K562 (cell line): ENCODE measurements at regions of chr13 and their contacts with region 1.

Region 1: DNA sequence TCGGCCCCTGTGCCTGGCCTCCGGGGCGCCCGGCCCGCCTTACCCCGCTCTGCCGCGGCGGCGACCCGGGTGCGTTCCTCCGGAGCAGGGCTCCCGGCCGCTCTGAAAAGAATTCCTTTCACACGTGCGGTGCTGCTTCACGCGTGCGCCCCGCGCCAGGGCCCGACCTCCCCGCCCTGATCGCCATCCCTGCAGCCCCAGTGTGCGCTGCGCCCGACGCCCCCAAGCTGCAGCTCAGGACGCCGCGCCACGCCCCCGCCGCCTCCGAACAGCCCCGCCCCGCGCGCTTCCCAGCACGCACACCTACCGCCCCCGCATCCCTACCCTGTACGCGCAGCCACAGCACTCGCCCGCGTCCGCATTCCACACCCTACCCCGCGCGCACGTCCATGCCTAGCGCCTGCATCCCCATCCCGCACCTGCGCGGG is at the start of gene GJA3:
- DNase-seq: peak; percentile 41 to 67 (median 60)
- ATAC-seq: peak; percentile 83
- H3K4me3 ChIP-seq: peak within 1 kb of the TSS; percentile 32
- H3K27ac ChIP-seq: no peak within 1 kb of the TSS
- H3K4me1 ChIP-seq: peaks cover 0 to 13% of the 10 kb centered on the region in 2 experiments; a peak in 3 of 5 replicates
- H3K27me3 ChIP-seq: peaks cover 2 to 3% of the 10 kb centered on the region in 2 experiments; a peak in 2 of 5 replicates
- CTCF ChIP-seq: no peak
- EP300 ChIP-seq: no peak
- POLR2A ChIP-seq: no peak
- RAD21 ChIP-seq: no peak
- polyA plus RNA-seq, gene GJA3: not detected

Region 2: GRCh38 chr13:19984430-19985218 is 176.2 kb before region 1 on chr13:
- CTCF ChIA-PET with region 1: no interaction called
- POLR2A ChIA-PET with region 1: no interaction called
- in situ Hi-C with region 1: loop called (anchors 10 kb)
- intact Hi-C with region 1: loop called (anchors 2 kb)
- DNase-seq: peak in 3 of 4 experiments; percentile 12 to 43 (median 24)
- ATAC-seq: peak; percentile 82
- H3K4me3 ChIP-seq: no peak overlapping the region
- H3K27ac ChIP-seq: no peak overlapping the region
- H3K4me1 ChIP-seq: peaks cover 4 to 8% of the 10 kb centered on the region in 2 experiments; a peak in 3 of 5 replicates
- H3K27me3 ChIP-seq: no peaks in the 10 kb centered on the region
- CTCF ChIP-seq: peak; percentile 21 to 58 (median 55); a peak in 5 of 6 replicates
- EP300 ChIP-seq: no peak
- POLR2A ChIP-seq: no peak
- RAD21 ChIP-seq: peak in 1 of 2 experiments; percentile 55; a peak in 2 of 4 replicates

Region 3: GRCh38 chr13:20035130-20035529 is 125.7 kb before region 1 on chr13:
- CTCF ChIA-PET with region 1: interaction called, 8 read pairs
- POLR2A ChIA-PET with region 1: no interaction called
- in situ Hi-C with region 1: no loop called
- intact Hi-C with region 1: loop called (anchors 1 kb)
- DNase-seq: peak in 2 of 4 experiments; percentile 5 to 19
- ATAC-seq: no peak
- H3K4me3 ChIP-seq: no peak overlapping the region
- H3K27ac ChIP-seq: no peak overlapping the region
- H3K4me1 ChIP-seq: no peaks in the 10 kb centered on the region
- H3K27me3 ChIP-seq: no peaks in the 10 kb centered on the region
- CTCF ChIP-seq: peak in 1 of 3 experiments; percentile 37; a peak in 1 of 6 replicates
- EP300 ChIP-seq: no peak
- POLR2A ChIP-seq: no peak
- RAD21 ChIP-seq: peak; percentile 15 to 45; a peak in 2 of 4 replicates

Region 4: DNA sequence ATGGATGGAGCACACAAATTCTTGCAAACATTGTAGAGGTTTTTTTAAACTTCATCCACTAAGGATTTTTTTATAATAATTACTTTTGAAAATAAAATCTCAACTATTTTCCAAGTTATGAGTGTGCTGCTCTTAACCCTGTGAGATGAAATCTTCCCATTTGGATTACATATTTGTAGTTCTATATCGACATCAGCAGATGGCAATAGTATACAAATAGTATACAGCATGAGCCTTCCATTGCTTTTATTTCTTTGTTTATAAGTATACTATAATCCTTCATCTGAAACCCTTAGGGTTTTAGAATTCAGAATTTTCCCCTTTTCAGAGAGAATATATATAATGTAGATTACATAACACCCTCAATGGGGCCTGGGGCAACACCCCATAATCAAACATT is 70.5 kb before region 1 on chr13:
- CTCF ChIA-PET with region 1: interaction called, 23 read pairs
- POLR2A ChIA-PET with region 1: no interaction called
- in situ Hi-C with region 1: no loop called
- intact Hi-C with region 1: loop called (anchors 2 kb)
- DNase-seq: no peak
- ATAC-seq: peak; percentile 68; the same call in 2 of the 3 replicates
- H3K4me3 ChIP-seq: no peak overlapping the region
- H3K27ac ChIP-seq: no peak overlapping the region
- H3K4me1 ChIP-seq: no peaks in the 10 kb centered on the region
- H3K27me3 ChIP-seq: peaks cover 0 to 7% of the 10 kb centered on the region in 2 experiments
- CTCF ChIP-seq: peak in 1 of 3 experiments; percentile 25; a peak in 2 of 6 replicates
- EP300 ChIP-seq: no peak
- POLR2A ChIP-seq: no peak
- RAD21 ChIP-seq: peak; percentile 43 to 44; a peak in 3 of 4 replicates